Endothelial cell of umbilical vein (primary cell): ENCODE measurements at regions of chr18 and their contacts with region 1.

Region 1: DNA sequence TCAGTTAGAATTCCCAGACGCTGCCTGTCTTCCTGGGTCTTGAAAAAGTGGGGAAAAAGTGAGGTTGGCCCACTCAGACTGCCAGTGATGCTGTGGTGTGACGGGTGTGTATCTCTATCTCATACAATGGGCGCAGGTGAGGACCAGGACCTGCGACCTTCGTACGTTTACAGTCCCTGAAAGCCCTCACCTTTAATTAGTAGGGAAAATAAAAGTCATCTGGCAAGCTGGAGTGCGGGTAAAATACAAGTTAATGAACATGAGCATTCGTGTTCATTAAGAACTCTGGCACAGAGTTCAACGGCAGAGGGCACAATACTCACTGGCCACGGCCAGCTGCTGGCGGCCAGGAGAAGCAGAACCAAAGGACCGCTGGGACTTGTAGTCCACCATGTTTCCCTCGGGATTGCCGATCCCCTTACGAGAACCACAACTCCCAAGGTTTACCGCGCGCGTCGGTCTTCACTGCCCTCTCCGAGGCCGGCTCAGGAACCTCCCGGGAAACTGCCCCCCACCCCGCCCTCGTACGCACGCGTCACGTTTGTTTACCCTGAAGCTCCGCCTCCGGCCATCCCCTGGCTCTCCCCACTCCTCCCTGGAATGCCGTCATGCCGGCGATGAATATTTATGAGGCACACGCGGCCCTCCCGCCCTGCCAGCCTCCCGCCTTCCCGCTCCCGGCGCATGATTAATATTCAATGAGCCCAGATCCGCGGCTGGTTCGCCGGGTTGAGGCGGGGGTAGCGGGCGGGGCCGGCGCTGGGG is 488 bp upstream of the PHLPP1 start:
- DNase-seq: peak; percentile 100
- H3K4me3 ChIP-seq: peak overlapping the region; percentile 21 to 76 (median 45)
- H3K27ac ChIP-seq: peak overlapping the region; percentile 88
- H3K4me1 ChIP-seq: peaks cover 20% of the 10 kb centered on the region
- H3K27me3 ChIP-seq: peaks cover 0 to 2% of the 10 kb centered on the region in 2 experiments
- CTCF ChIP-seq: peak; percentile 73 to 79
- POLR2A ChIP-seq: no peak

Region 2: GRCh38 chr18:62584241-62585120 is 130.4 kb before region 1 on chr18:
- CTCF ChIA-PET with region 1: interaction called, 13 read pairs
- POLR2A ChIA-PET with region 1: no interaction called
- dilution Hi-C with region 1: no loop called
- intact Hi-C with region 1: loop called (anchors 1 kb)
- DNase-seq: peak; percentile 90
- H3K4me3 ChIP-seq: no peak overlapping the region
- H3K27ac ChIP-seq: no peak overlapping the region
- H3K4me1 ChIP-seq: peaks cover 11% of the 10 kb centered on the region
- H3K27me3 ChIP-seq: no peaks in the 10 kb centered on the region
- CTCF ChIP-seq: peak; percentile 92 to 95
- POLR2A ChIP-seq: no peak

Region 3: DNA sequence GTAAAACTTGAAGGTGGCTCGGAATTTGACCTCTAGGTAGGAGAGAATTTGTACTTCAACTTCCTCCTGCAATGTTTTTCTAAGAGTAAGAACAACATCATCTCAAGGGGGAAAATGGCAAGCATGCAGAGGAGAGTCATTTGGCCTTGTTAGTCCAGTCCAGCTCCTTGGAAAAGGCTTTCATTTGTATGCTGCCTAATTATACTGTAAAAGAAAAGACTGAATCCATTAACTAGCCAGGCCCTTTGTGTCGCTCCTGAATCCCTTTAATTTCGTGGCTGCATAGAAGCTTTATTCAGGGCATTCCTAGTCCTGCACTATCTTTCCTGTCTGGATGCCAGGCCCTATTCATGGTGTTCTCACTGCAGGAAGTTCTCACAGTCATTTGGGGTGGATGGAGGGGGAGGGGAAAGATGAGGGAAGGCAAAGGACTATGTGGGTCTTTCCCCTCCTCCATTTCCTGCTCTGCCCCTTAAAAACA is 36.5 kb after region 1 on chr18:
- CTCF ChIA-PET with region 1: interaction called, 3 read pairs
- POLR2A ChIA-PET with region 1: interaction called, 3 read pairs
- dilution Hi-C with region 1: no loop called
- intact Hi-C with region 1: loop called (anchors 1 kb)
- DNase-seq: peak; percentile 71
- H3K4me3 ChIP-seq: peak overlapping the region in 1 of 3 experiments; percentile 16
- H3K27ac ChIP-seq: peak overlapping the region; percentile 46
- H3K4me1 ChIP-seq: peaks cover 22% of the 10 kb centered on the region
- H3K27me3 ChIP-seq: no peaks in the 10 kb centered on the region
- CTCF ChIP-seq: no peak
- POLR2A ChIP-seq: no peak

Region 4: DNA sequence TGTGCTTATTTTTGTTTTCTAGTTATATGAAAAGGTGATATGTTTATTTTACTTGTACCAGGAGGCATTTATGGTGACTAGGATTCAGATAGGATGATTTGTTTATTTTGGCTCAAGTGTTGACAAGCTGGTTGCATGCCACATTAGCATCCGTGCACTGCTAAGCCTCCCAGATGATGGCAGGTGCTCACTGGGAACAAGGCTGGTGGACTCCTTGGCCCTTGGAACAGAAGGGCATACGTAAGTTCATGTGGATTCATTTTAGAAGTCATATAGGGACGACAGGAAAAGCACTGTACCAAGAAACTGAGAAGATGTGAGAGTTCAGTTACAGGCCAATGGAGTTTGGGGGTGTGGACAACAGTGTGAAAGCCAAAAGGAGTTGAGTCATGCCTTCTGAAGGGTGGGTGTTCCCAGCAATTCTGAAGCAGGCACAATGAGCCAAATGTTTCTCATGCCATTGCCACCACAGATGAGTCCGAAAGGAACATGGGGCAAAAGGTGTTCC is 166.7 kb after region 1 on chr18:
- CTCF ChIA-PET with region 1: interaction called, 42 read pairs
- POLR2A ChIA-PET with region 1: interaction called, 6 read pairs
- dilution Hi-C with region 1: no loop called
- intact Hi-C with region 1: loop called (anchors 2 kb)
- DNase-seq: peak; percentile 77
- H3K4me3 ChIP-seq: no peak overlapping the region
- H3K27ac ChIP-seq: peak overlapping the region; percentile 38
- H3K4me1 ChIP-seq: peaks cover 59% of the 10 kb centered on the region
- H3K27me3 ChIP-seq: no peaks in the 10 kb centered on the region
- CTCF ChIP-seq: no peak
- POLR2A ChIP-seq: no peak

Region 5: GRCh38 chr18:62957885-62958472 is 243.1 kb after region 1 on chr18:
- CTCF ChIA-PET with region 1: interaction called, 169 read pairs
- POLR2A ChIA-PET with region 1: no interaction called
- dilution Hi-C with region 1: no loop called
- intact Hi-C with region 1: loop called (anchors 1 kb)
- DNase-seq: peak; percentile 60
- H3K4me3 ChIP-seq: no peak overlapping the region
- H3K27ac ChIP-seq: no peak overlapping the region
- H3K4me1 ChIP-seq: peaks cover 5% of the 10 kb centered on the region
- H3K27me3 ChIP-seq: no peaks in the 10 kb centered on the region
- CTCF ChIP-seq: peak; percentile 31 to 42
- POLR2A ChIP-seq: no peak